ENCODE measurements at regions of chr11 and their contacts with region 1.

Region 1: GRCh38 chr11:8989453-8989852 is 14.3 kb downstream of the NRIP3 start:
- DNase-seq: peak; percentile 7 to 42
- H3K4me3 ChIP-seq: no peak overlapping the region
- H3K27ac ChIP-seq: no peak overlapping the region
- H3K4me1 ChIP-seq: peaks cover 11% of the 10 kb centered on the region; the same call in 1 of the 2 replicates
- H3K27me3 ChIP-seq: no peaks in the 10 kb centered on the region
- CTCF ChIP-seq: no peak

Region 2: DNA sequence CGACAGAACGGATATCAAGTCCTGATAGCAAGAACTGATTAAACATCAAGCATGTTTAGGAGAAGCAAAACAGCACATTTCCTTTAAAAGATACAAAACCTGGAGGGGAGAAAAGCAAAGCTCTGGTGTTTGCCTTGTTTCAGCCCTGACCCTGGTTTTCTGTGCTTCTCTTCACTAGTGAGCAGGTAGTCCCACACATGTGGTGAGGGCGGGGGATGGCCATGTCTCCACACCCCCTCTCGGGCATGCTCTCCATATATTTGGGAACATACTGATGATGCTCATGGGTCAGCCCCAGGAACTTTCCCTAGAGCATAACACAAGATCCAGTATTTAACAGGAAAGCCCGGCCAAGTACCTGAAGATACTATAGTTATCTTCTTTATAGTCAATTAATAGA is 66.8 kb before region 1 on chr11:
- CTCF ChIA-PET with region 1: no interaction called
- POLR2A ChIA-PET with region 1: no interaction called
- intact Hi-C with region 1: no loop called
- DNase-seq: no peak
- H3K4me3 ChIP-seq: no peak overlapping the region
- H3K27ac ChIP-seq: no peak overlapping the region
- H3K4me1 ChIP-seq: no peaks in the 10 kb centered on the region
- H3K27me3 ChIP-seq: no peaks in the 10 kb centered on the region
- CTCF ChIP-seq: no peak

Region 3: DNA sequence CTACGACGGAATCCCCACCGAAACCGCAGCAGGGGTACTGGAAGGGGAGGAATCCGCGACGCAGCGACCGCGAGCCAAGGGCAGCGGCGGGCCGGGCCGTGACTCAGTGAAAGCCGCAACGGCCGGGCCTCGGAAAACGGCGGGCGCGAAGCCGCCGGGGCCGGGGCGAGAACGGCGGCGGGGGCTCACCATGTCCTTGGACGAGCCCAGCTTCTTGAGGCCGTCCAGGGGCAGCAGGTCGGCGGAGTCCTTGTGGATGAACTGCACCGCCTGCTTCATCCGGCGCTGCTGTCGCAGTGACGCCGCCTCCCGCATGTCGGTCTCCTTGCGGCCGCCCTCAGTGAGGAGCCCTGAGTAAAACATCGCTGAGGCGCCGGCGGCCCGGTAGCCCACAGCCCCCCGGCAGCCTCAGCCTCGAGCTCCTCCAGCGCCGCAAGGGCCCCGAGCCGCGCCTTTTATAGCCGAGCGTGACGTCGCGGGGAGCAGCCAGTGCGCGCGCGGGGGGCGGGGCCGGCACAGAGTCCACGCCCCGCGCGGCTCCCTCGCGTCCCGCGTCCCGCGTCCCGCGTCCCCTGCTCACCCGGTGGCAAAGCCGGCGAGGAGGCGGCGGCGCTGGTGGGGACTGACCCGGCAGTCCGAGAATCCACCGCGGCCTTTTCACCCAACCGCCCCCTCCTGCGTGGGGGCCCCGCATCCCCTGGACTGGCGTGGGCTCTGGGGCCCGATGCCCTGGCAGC is 14.3 kb after region 1 on chr11 and contains the start of gene NRIP3:
- CTCF ChIA-PET with region 1: no interaction called
- POLR2A ChIA-PET with region 1: no interaction called
- intact Hi-C with region 1: no loop called
- DNase-seq: peak in 1 of 2 experiments; percentile 38
- H3K4me3 ChIP-seq: peak within 1 kb of the TSS; percentile 35; the same call in 1 of the 2 replicates
- H3K27ac ChIP-seq: no peak within 1 kb of the TSS
- H3K4me1 ChIP-seq: no peaks in the 10 kb centered on the region
- H3K27me3 ChIP-seq: peaks cover 20% of the 10 kb centered on the region
- CTCF ChIP-seq: no peak
- total RNA-seq, gene NRIP3: 1.1 and 2.1 TPM in 2 replicates

Region 4: DNA sequence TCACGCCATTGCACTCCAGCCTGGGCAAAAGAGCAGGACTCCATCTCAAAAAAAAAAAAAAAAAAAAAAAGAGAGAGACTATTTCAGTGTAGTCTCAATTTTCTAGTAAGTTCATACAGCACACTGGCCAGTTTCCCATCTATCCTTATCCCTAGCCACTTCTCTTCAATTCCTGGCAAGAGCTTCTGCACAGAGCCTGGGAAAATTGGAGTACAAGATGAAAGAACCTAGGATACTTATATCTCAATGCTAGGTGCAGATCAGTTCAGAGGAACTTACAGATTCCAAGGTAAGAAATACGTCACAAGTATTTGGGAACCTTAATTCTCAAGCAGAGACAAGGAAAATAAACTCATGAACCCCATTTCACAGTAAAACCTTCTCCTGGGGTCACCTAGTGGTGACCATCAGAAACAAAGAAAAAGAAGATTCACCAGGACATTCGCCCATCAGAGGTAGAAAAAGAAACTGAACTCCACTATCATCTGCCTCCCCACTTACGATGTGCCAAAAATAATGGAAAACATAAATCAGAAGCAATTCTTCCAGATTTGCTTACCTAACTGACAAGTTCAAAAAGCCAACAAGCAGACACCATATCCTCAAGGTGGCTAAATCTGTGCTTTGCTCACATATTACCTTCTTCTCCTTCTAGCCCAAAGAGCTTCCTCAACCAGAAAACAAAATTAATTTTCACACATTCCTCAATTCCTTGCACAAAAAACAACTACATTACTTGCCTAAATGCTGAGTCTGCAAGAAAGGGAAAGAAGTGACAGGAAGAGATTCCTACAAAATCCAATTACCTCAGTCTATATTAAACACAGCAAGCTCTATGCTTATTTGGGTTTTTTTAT is 270.8 kb after region 1 on chr11:
- CTCF ChIA-PET with region 1: no interaction called
- POLR2A ChIA-PET with region 1: interaction called, 19 read pairs
- intact Hi-C with region 1: no loop called
- DNase-seq: no peak
- H3K4me3 ChIP-seq: no peak overlapping the region
- H3K27ac ChIP-seq: no peak overlapping the region
- H3K4me1 ChIP-seq: peaks cover 13% of the 10 kb centered on the region
- H3K27me3 ChIP-seq: no peaks in the 10 kb centered on the region
- CTCF ChIP-seq: no peak

Region 5: GRCh38 chr11:9302448-9302847 is 313.0 kb after region 1 on chr11:
- CTCF ChIA-PET with region 1: no interaction called
- POLR2A ChIA-PET with region 1: no interaction called
- intact Hi-C with region 1: no loop called
- DNase-seq: no peak
- H3K4me3 ChIP-seq: no peak overlapping the region
- H3K27ac ChIP-seq: no peak overlapping the region
- H3K4me1 ChIP-seq: no peaks in the 10 kb centered on the region
- H3K27me3 ChIP-seq: no peaks in the 10 kb centered on the region
- CTCF ChIP-seq: no peak

Region 6: DNA sequence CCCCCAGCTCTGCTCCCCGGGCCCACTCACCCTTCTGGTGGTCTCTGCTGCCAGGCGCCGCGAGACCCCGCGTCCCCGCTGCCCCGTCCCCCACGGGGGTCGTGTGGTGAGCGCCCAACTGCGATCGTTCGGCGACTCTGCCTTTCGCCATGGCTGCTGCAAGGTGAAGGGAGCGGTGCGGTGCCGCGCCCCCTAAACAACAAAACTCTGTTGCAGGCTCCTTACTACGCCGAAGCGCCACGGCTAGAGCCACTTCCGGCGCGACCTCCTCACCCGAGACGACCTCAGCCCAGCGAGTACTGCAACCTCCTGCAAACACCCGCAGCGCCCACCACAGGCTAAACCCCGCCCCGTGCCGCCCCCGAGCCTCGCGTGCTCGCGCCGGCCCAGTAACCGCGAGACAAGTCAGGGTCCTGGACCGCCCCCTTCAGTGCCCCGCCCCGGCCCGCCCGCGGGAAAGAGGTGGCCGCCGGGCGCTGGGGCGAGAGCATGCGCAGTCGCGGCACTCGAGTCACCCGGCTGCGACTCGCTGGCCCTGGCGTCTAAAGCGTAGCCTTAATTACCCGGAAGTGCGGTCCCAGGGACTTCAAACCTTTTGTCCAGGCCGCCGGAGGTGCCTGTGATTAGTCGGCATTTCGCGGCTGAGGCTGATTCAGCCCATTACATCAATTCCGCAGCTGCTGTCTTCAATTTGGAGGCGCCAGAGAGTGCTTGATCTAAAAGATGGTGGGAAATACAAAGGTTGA is 325.0 kb after region 1 on chr11 and contains the start of gene TMEM41B:
- CTCF ChIA-PET with region 1: no interaction called
- POLR2A ChIA-PET with region 1: no interaction called
- intact Hi-C with region 1: no loop called
- DNase-seq: peak; percentile 92 to 96
- H3K4me3 ChIP-seq: peak within 1 kb of the TSS; percentile 96
- H3K27ac ChIP-seq: peak within 1 kb of the TSS; percentile 87
- H3K4me1 ChIP-seq: peaks cover 19% of the 10 kb centered on the region
- H3K27me3 ChIP-seq: no peaks in the 10 kb centered on the region
- CTCF ChIP-seq: no peak
- total RNA-seq, gene TMEM41B: 58.5 and 65.1 TPM in 2 replicates